ENCODE measurements at regions of chr20 and their contacts with region 1.

Region 1: DNA sequence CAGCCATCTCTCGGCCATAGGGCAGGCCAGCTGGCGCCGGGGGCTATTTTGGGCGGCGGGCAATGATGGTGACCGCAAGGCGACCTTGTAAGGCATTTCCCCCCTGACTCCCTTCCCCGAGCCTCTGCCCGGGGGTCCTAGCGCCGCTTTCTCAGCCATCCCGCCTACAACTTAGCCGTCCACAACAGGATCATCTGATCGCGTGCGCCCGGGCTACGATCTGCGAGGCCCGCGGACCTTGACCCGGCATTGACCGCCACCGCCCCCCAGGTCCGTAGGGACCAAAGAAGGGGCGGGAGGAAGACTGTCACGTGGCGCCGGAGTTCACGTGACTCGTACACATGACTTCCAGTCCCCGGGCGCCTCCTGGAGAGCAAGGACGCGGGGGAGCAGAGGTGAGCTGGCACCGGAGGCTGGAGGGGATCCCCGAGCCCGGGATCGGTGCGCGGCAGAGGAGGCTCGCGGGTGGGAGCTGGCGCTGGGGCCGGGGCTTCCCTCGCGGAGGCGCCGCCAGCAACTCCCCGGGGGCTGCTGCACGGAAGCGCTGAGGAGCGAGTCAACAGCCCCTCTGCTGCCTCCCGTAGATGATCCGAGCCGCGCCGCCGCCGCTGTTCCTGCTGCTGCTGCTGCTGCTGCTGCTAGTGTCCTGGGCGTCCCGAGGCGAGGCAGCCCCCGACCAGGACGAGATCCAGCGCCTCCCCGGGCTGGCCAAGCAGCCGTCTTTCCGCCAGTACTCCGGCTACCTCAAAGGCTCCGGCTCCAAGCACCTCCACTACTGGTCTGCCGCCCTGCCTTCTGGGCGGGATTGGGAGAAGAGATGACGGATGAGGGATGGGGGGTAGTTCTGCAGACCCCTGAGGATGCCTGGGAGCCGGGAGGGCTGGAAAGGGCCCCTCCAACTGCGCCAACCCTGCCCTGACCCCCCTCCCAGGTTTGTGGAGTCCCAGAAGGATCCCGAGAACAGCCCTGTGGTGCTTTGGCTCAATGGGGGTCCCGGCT is at the starts of genes CTSA and NEURL2:
- DNase-seq: peak; percentile 77 to 90 (median 81)
- H3K4me3 ChIP-seq: peak within 1 kb of the TSS; percentile 85
- H3K4me3 Mint-ChIP-seq: peak within 1 kb of the TSS; percentile 87 to 95 (median 92)
- H3K27ac ChIP-seq: peak within 1 kb of the TSS; percentile 53
- H3K27ac Mint-ChIP-seq: peak within 1 kb of the TSS; percentile 83 to 97 (median 91)
- H3K4me1 ChIP-seq: peaks cover 23% of the 10 kb centered on the region
- H3K4me1 Mint-ChIP-seq: peaks cover 29 to 47% (median 39%) of the 10 kb centered on the region in 3 donors
- H3K27me3 ChIP-seq: no peaks in the 10 kb centered on the region
- H3K27me3 Mint-ChIP-seq: no peaks in the 10 kb centered on the region
- total RNA-seq, gene CTSA: 81.1 to 82.1 TPM
- total RNA-seq, gene NEURL2: 2.7 to 2.8 TPM

Region 2: GRCh38 chr20:45880988-45881788 is 10.1 kb before region 1 on chr20 and contains the start of gene ZSWIM1:
- CTCF ChIA-PET with region 1: interaction called, 10 read pairs
- POLR2A ChIA-PET with region 1: interaction called, 16 read pairs
- DNase-seq: peak; percentile 96 to 99 (median 98)
- H3K4me3 ChIP-seq: peak within 1 kb of the TSS; percentile 77
- H3K4me3 Mint-ChIP-seq: peak within 1 kb of the TSS; percentile 79 to 91 (median 89)
- H3K27ac ChIP-seq: peak within 1 kb of the TSS; percentile 74
- H3K27ac Mint-ChIP-seq: peak within 1 kb of the TSS; percentile 85 to 97 (median 96)
- H3K4me1 ChIP-seq: peaks cover 19% of the 10 kb centered on the region
- H3K4me1 Mint-ChIP-seq: peaks cover 28 to 42% (median 41%) of the 10 kb centered on the region in 3 donors
- H3K27me3 ChIP-seq: no peaks in the 10 kb centered on the region
- H3K27me3 Mint-ChIP-seq: no peaks in the 10 kb centered on the region
- total RNA-seq, gene ZSWIM1: 12.3 TPM